Adrenal gland (tissue), 19 donors: ENCODE measurements at regions of chr9 and their contacts with region 1.

Region 1: GRCh38 chr9:6049798-6050197 is 34.4 kb upstream of the RANBP6 start:
- DNase-seq: peak in 1 of 7 donors; percentile 31
- H3K4me3 ChIP-seq: no peak overlapping the region
- H3K27ac ChIP-seq: no peak overlapping the region
- H3K4me1 ChIP-seq: no peaks in the 10 kb centered on the region
- H3K27me3 ChIP-seq: no peaks in the 10 kb centered on the region
- CTCF ChIP-seq: peak in 2 of 6 experiments; percentile 20 to 25
- POLR2A ChIP-seq: no peak

Region 2: GRCh38 chr9:5899292-5899691 is 150.5 kb before region 1 on chr9:
- intact Hi-C with region 1: loop called in 1 of 2 experiments (anchors 10 kb)
- DNase-seq: no peak
- H3K4me3 ChIP-seq: no peak overlapping the region
- H3K27ac ChIP-seq: no peak overlapping the region
- H3K4me1 ChIP-seq: no peaks in the 10 kb centered on the region
- H3K27me3 ChIP-seq: no peaks in the 10 kb centered on the region
- CTCF ChIP-seq: peak in 1 of 6 experiments; percentile 6
- POLR2A ChIP-seq: no peak

Region 3: DNA sequence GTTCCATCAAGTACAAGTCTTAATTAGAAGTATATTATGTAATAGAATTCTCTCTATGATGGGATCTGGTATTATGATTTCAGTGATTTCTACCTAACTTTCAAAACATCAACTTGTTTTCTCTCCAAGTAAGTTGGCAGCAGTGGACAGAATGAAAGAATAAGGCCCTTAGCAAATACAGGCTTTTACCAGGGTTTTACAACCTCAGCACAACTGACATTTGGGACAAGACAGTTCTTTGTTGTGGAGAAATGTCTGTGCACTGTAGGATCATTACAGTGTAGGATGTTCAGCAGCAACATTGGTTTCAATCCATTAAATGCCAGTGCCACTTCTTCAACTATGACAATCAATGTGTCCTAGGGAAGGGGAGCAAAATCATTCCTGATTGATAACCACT is 110.3 kb before region 1 on chr9:
- intact Hi-C with region 1: no loop called
- DNase-seq: no peak
- H3K4me3 ChIP-seq: no peak overlapping the region
- H3K27ac ChIP-seq: no peak overlapping the region
- H3K4me1 ChIP-seq: no peaks in the 10 kb centered on the region
- H3K27me3 ChIP-seq: no peaks in the 10 kb centered on the region
- CTCF ChIP-seq: no peak
- POLR2A ChIP-seq: no peak